OCI-LY7 (cell line): ENCODE measurements at regions of chrX and their contacts with region 1.

Region 1: GRCh38 chrX:132219343-132219768 is at the start of gene RAP2C:
- DNase-seq: peak; percentile 76
- H3K4me3 ChIP-seq: peak within 1 kb of the TSS; percentile 78
- H3K27ac ChIP-seq: peak within 1 kb of the TSS; percentile 66
- H3K4me1 ChIP-seq: peaks cover 15% of the 10 kb centered on the region
- CTCF ChIP-seq: peak; percentile 67
- total RNA-seq, gene RAP2C: 9.0 and 13.8 TPM in 2 replicates

Region 2: DNA sequence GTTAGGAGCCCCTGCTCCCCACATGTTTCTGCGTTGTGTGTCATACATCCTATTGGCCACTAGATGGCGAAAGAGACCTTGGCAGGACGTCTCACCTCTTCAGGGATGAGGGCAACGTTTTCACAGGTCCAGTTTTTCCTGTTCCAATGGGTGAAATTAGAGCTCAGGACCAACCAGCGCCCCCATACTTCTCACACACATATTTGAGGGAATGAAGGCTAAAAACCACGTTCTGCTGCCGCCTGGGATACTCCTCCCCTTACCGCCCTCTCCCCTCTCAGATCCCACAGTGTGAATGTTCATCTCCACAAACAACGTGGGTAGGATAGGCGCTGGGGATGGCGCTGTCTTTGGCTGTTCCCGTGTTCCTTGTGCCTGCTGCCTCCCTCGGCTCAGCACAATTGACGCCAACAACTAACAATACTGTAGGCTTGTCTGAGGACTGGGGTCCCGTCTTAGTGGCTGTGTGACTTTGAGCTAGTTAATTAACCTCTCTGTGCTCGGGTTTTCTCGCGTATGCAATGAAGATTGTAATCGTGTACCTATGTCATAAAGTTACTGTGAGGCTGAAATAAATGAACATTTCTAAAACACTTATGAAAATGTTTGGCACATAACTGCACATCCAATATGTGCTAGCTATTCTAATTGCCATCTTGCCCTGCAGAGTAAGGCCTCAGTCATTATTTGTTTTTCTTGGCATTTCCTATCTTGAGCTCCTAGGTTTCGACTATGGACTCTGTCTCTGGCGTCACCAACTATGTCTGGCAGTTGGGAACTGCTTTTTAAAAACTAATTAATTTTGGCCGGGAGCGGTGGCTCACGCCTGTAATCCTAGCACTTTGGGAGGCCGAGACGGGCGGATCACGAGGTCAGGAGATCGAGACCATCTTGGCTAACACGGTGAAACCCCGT is 377.6 kb before region 1 on chrX:
- CTCF ChIA-PET with region 1: no interaction called
- POLR2A ChIA-PET with region 1: interaction called, 3 read pairs
- intact Hi-C with region 1: loop called (anchors 2 kb)
- DNase-seq: peak; percentile 52
- H3K4me3 ChIP-seq: no peak overlapping the region
- H3K27ac ChIP-seq: no peak overlapping the region
- H3K4me1 ChIP-seq: no peaks in the 10 kb centered on the region
- CTCF ChIP-seq: peak; percentile 75

Region 3: DNA sequence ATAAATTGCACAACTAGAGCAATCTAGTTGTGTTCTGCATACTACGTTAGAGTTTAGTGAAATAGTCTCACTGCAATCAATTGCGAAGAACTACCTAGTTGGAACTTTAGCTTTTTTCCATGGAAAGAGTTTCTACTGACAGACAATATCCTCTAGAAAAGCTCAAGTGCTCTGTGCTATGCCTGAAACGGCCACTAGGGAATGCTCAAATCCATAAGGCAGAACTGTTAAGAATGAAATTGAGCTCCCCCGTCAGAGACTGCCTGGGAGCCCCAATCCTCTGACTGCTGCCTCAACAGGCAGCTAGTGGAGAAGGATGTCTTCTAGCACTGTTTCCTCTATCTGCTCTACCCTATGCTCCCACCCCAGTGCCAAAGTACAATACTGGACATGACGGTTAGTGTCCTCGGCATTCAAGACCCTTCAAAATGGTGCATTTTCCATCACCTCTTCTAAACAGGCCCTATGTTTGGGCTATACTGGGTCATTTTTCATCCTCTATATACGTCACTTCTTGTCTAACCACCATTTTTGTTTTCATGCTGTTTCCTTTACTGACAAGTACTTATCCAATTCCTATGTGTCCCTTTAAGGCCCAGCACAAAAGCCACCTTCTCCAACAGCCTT is 126.8 kb before region 1 on chrX:
- CTCF ChIA-PET with region 1: interaction called, 4 read pairs
- POLR2A ChIA-PET with region 1: no interaction called
- intact Hi-C with region 1: loop called (anchors 1 kb)
- DNase-seq: peak; percentile 51
- H3K4me3 ChIP-seq: no peak overlapping the region
- H3K27ac ChIP-seq: no peak overlapping the region
- H3K4me1 ChIP-seq: no peaks in the 10 kb centered on the region
- CTCF ChIP-seq: peak; percentile 71

Region 4: GRCh38 chrX:132488819-132489577 is 269.6 kb after region 1 on chrX and contains the start of gene MBNL3:
- CTCF ChIA-PET with region 1: interaction called, 21 read pairs
- POLR2A ChIA-PET with region 1: no interaction called
- intact Hi-C with region 1: loop called (anchors 2 kb)
- DNase-seq: peak; percentile 90
- H3K4me3 ChIP-seq: peak within 1 kb of the TSS; percentile 78
- H3K27ac ChIP-seq: peak within 1 kb of the TSS; percentile 100
- H3K4me1 ChIP-seq: peaks cover 35% of the 10 kb centered on the region
- CTCF ChIP-seq: no peak
- total RNA-seq, gene MBNL3: 31.4 and 39.4 TPM in 2 replicates